Activated CD4-positive, alpha-beta T cell treated with anti-CD3 and anti-CD28 coated beads, Interleukin-2, amount 10 ng/mL, durations not matched to agents 24 days and 14 days (primary cell): ENCODE measurements at regions of chr9 and their contacts with region 1.

Region 1: DNA sequence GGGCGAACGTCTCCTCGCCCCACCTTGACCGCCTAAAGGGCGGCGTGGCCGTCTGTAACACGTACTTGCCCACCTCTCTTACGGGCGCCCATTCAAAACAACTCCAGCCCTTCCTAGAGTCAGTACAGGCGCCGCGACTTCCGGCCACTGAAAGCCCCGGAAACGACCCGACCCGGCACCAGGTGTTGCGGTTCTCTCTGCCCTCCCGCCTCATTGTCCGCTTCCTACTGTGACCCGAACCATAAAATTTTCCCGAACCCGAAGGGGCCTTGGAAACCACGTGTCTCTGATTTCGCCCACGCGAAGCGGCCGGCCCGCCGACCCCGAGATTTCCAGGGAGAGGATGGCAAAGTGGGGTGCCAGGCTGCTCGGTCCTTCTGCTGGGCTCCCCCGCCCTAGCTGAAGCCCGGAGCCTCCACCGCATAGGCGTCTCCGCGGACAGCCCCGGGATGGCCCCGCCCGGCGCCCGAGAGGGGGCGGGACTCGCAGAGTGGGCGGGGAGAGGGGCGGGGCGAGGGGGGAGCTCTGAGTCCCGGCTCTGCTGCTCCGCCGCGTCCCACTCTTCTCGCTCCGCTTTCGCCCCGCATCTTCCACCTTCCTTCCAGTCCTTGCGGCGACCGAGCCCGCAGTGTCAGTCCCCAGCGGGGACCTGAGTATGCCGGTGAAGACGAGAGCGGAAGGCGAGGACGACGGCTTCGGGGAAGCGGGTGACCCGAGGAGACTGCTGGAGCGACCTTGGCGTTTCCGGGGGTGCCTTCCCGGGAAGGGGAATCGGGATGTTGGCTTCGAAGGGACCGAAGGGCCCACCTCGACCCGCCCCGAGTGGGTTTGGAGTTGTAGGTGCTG is 684 bp upstream of the PTGES2 start:
- DNase-seq: peak; percentile 96
- H3K4me3 Mint-ChIP-seq: peak overlapping the region; percentile 99
- H3K27ac Mint-ChIP-seq: peak overlapping the region; percentile 99
- H3K4me1 Mint-ChIP-seq: peaks cover 32% of the 10 kb centered on the region
- H3K27me3 Mint-ChIP-seq: peaks cover 10% of the 10 kb centered on the region

Region 2: DNA sequence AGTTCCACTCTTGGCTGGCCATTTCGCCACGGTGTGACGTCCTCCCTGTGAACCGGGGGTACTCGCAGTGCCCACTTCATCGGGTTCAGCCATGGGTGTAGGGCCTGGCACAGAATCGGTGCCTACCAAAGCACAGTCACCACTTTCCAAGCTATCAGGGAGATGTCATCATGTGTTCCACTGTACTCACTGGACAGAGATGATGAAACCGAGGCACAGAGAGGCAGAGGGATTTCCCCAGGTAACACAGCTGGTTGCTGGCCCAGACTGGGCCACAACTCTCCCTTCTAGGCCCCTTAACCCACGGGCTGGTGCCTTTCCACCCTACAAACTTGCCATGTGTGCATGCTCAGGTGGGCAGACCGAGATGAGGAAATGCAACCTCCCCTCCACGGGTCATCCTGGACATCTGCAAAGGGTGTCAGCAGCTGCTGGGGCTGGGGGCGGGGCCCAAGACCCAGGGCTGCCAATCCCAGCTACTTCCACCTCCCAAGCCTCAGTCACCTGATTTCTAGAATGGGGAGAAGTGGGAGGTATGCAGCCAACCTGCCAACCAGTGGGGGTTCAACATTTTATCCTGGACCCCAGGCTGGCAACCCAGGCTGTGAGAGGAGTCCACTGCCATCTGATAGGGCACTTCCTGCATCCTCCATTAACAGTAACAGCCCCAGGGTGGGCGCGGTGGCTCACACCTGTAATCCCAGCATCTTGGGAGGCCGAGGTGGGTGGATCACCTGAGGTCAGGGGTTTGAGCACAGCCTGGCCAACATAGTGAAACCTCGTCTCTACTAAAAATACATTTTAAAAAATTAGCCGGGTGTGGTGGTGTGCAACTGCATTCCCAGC is 348.9 kb before region 1 on chr9:
- intact Hi-C with region 1: loop called (anchors 2 kb)
- DNase-seq: peak; percentile 86
- H3K4me3 Mint-ChIP-seq: peak overlapping the region; percentile 98
- H3K27ac Mint-ChIP-seq: peak overlapping the region; percentile 98
- H3K4me1 Mint-ChIP-seq: peaks cover 55% of the 10 kb centered on the region
- H3K27me3 Mint-ChIP-seq: no peaks in the 10 kb centered on the region

Region 3: GRCh38 chr9:128094166-128094967 is 33.8 kb before region 1 on chr9:
- intact Hi-C with region 1: loop called (anchors 1 kb)
- DNase-seq: peak; percentile 95
- H3K4me3 Mint-ChIP-seq: peak overlapping the region; percentile 85
- H3K27ac Mint-ChIP-seq: peak overlapping the region; percentile 98
- H3K4me1 Mint-ChIP-seq: peaks cover 55% of the 10 kb centered on the region
- H3K27me3 Mint-ChIP-seq: no peaks in the 10 kb centered on the region

Region 4: GRCh38 chr9:128159784-128160602 is 31.8 kb after region 1 on chr9 and contains the start of gene BBLN:
- intact Hi-C with region 1: loop called (anchors 1 kb)
- DNase-seq: peak; percentile 98
- H3K4me3 Mint-ChIP-seq: peak within 1 kb of the TSS; percentile 83
- H3K27ac Mint-ChIP-seq: peak within 1 kb of the TSS; percentile 91
- H3K4me1 Mint-ChIP-seq: peaks cover 23% of the 10 kb centered on the region
- H3K27me3 Mint-ChIP-seq: no peaks in the 10 kb centered on the region
- total RNA-seq, gene BBLN: 89.3 and 91.4 TPM in 2 replicates

Region 5: GRCh38 chr9:128203024-128203706 is 75.0 kb after region 1 on chr9 and contains the start of gene DNM1:
- intact Hi-C with region 1: loop called (anchors 1 kb)
- DNase-seq: peak; percentile 95
- H3K4me3 Mint-ChIP-seq: peak within 1 kb of the TSS; percentile 72
- H3K27ac Mint-ChIP-seq: peak within 1 kb of the TSS; percentile 64
- H3K4me1 Mint-ChIP-seq: peaks cover 16% of the 10 kb centered on the region
- H3K27me3 Mint-ChIP-seq: peaks cover 32% of the 10 kb centered on the region
- total RNA-seq, gene DNM1: 0.95 and 1.5 TPM in 2 replicates

Region 6: GRCh38 chr9:128275996-128276573 is 147.9 kb after region 1 on chr9 and contains the starts of genes GOLGA2 and SWI5:
- intact Hi-C with region 1: loop called (anchors 1 kb)
- DNase-seq: peak; percentile 100
- H3K4me3 Mint-ChIP-seq: peak within 1 kb of the TSS; percentile 93
- H3K27ac Mint-ChIP-seq: peak within 1 kb of the TSS; percentile 95
- H3K4me1 Mint-ChIP-seq: peaks cover 45% of the 10 kb centered on the region
- H3K27me3 Mint-ChIP-seq: peaks cover 3% of the 10 kb centered on the region
- total RNA-seq, gene GOLGA2: 44.1 and 50.4 TPM in 2 replicates
- total RNA-seq, gene SWI5: 13.6 and 14.3 TPM in 2 replicates